ENCODE measurements at regions of chr19 and their contacts with region 1.

Region 1: DNA sequence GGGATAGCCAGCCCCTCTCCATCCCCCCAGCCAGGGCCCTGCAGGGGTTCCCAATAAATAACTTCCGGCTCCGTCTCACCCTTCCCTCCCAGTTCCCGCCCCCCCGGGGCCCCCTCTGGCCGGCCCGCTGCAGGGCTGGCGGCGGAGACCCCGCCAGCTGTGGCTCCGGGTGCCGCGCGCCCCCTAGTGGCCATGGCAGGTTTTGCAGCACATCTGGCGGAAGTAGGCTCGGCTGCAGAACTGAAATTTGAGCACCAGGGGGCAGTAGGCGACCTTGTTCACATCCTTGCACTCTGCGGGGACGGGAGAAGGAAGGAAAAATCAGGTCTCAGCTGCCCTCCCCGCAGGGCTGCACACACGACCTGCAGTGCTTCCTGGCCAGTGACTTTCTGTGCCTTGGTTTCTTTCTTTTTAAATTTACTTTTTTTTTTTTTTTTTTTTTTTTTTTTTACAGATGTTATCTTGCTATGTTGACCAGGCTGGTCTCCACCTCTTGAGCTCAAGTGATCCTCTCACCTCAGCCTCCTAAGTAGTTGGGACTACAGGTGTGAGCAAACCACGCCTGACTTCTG is 3.6 kb upstream of the MYO1F start:
- DNase-seq: peak; percentile 90
- H3K4me3 Mint-ChIP-seq: no peak overlapping the region
- H3K27ac Mint-ChIP-seq: no peak overlapping the region
- H3K4me1 Mint-ChIP-seq: peaks cover 29% of the 10 kb centered on the region
- H3K27me3 Mint-ChIP-seq: peaks cover 2% of the 10 kb centered on the region

Region 2: DNA sequence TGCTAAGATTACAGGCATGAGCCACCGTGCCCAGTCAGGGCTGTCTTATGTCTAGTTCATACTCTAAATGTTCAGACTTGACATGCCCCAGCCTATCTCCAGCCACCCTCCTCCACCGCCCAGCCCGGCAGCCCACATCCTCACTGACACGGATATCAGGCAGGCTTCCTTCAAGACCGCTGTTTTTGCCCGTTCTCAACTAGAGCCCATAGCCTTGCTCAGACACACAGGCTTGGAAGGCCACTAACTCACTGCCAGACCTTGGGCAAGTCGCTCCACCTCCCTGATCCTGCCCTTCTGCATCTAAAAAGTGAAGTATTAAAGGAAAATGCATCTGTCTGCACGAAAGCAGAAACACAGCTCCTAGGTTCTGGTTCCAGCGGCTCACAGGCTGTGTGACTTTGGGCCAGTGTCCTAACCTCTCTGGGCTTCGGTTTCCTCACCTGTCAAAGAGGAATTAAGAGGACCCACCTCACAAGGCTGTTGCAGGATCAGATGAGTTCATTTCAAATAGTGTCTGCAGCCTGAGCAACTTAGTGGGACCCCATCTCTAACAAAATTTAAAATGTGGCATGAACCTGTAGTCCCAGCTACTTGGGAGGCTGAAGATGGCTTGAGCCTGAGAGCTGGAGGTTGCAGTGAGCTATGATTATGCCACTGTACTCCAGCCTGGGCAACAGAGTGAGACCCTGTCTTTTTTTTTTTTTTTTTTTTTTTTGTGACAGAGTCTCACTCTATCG is 386.1 kb before region 1 on chr19:
- CTCF ChIA-PET with region 1: no interaction called
- POLR2A ChIA-PET with region 1: no interaction called
- intact Hi-C with region 1: no loop called
- DNase-seq: peak; percentile 73
- H3K4me3 Mint-ChIP-seq: peak overlapping the region; percentile 37
- H3K27ac Mint-ChIP-seq: peak overlapping the region; percentile 90
- H3K4me1 Mint-ChIP-seq: peaks cover 39% of the 10 kb centered on the region
- H3K27me3 Mint-ChIP-seq: no peaks in the 10 kb centered on the region

Region 3: GRCh38 chr19:8355631-8356402 is 225.0 kb before region 1 on chr19:
- CTCF ChIA-PET with region 1: interaction called, 52 read pairs
- POLR2A ChIA-PET with region 1: no interaction called
- intact Hi-C with region 1: loop called (anchors 5 kb)
- DNase-seq: peak; percentile 19
- H3K4me3 Mint-ChIP-seq: no peak overlapping the region
- H3K27ac Mint-ChIP-seq: no peak overlapping the region
- H3K4me1 Mint-ChIP-seq: peaks cover 8% of the 10 kb centered on the region
- H3K27me3 Mint-ChIP-seq: peaks cover 10% of the 10 kb centered on the region

Region 4: DNA sequence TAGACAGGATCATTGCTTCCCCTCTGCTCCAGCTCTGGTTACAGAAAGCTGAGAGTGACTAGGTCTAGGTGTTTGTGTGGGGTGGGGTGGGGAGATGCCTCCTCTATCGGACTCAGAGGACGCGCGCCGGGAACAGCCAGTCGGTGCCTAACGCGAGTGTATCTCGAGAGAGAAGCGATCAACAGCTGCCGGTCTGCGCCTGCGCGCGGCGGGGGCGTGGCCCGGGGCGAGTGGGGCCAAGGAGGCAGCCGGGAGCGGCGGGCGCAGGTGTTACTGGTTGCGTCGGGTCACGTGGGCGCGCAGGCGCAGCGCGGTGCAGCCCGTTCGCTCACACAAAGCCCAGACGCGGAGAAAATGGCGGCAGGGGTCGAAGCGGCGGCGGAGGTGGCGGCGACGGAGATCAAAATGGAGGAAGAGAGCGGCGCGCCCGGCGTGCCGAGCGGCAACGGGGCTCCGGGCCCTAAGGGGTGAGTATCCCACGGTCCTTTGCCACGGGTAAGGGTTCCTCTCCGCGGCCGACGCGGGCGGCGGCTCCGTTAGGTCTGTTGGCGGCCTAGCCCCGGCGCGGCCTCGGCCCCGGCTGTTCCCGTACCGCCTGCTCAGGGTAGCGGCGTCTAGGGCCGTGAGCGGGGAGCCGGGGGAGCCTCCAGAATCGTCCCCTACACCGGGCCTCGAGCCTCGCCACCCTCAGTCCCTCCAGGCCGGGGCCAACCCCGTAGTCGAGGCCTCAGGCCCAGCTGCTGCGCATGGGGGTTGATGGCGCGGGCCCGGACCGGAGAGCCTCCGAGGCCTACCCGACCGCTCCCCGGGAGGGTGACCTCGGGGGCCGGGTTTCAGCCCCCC is 135.9 kb before region 1 on chr19 and contains the start of gene HNRNPM:
- CTCF ChIA-PET with region 1: interaction called, 9 read pairs
- POLR2A ChIA-PET with region 1: interaction called, 4 read pairs
- intact Hi-C with region 1: loop called (anchors 5 kb)
- DNase-seq: peak; percentile 100
- H3K4me3 Mint-ChIP-seq: peak within 1 kb of the TSS; percentile 90
- H3K27ac Mint-ChIP-seq: peak within 1 kb of the TSS; percentile 98
- H3K4me1 Mint-ChIP-seq: peaks cover 36% of the 10 kb centered on the region
- H3K27me3 Mint-ChIP-seq: no peaks in the 10 kb centered on the region
- total RNA-seq, gene HNRNPM: 237 to 238 TPM

Region 5: GRCh38 chr19:8536282-8536681 is 44.5 kb before region 1 on chr19:
- CTCF ChIA-PET with region 1: interaction called, 11 read pairs
- POLR2A ChIA-PET with region 1: no interaction called
- intact Hi-C with region 1: no loop called
- DNase-seq: no peak
- H3K4me3 Mint-ChIP-seq: no peak overlapping the region
- H3K27ac Mint-ChIP-seq: no peak overlapping the region
- H3K4me1 Mint-ChIP-seq: no peaks in the 10 kb centered on the region
- H3K27me3 Mint-ChIP-seq: no peaks in the 10 kb centered on the region

Region 6: DNA sequence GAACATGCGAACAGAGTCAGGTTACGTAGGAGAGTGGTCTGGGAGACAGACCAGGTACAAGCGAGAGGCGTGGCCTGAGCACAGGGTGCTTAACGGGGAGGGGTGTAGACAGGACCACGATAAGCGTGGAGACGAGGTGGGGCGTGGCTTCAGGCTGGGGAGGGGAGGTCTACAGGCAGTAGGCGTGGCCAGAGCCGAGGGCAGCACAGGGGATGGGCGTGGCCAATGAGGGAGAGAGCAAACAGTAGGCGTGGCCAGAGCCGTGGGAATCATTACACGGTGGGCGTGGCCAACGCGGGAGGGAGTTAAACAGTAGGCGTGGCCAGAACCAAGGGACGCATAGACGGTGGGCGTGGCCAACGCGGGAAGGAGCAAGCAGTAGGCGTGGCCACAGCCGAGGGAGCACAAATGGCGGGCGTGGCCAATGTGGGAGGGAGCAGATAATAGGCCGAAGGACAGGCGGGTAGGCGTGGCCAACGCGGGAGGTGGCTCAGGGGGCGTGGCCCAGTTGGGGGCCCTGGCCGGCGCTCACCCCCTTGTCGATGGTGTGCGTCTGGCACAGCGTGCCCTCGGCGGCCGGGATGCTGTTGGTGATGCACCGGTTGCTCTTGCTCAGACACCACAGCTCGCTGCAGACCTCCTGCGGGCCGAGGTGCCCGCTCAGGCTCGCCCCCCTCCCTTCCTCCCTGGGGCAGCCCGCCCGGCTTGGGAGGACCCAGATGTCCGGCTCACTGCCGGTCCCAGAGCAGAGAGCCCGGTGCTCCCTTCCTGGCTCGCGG is 11.6 kb after region 1 on chr19:
- CTCF ChIA-PET with region 1: interaction called, 61 read pairs
- POLR2A ChIA-PET with region 1: interaction called, 4 read pairs
- intact Hi-C with region 1: loop called (anchors 1 kb)
- DNase-seq: peak; percentile 99
- H3K4me3 Mint-ChIP-seq: peak overlapping the region; percentile 70
- H3K27ac Mint-ChIP-seq: peak overlapping the region; percentile 59
- H3K4me1 Mint-ChIP-seq: peaks cover 7% of the 10 kb centered on the region
- H3K27me3 Mint-ChIP-seq: no peaks in the 10 kb centered on the region

Region 7: GRCh38 chr19:8626842-8627241 is 46.0 kb after region 1 on chr19:
- CTCF ChIA-PET with region 1: no interaction called
- POLR2A ChIA-PET with region 1: no interaction called
- intact Hi-C with region 1: no loop called
- DNase-seq: no peak
- H3K4me3 Mint-ChIP-seq: no peak overlapping the region
- H3K27ac Mint-ChIP-seq: no peak overlapping the region
- H3K4me1 Mint-ChIP-seq: no peaks in the 10 kb centered on the region
- H3K27me3 Mint-ChIP-seq: no peaks in the 10 kb centered on the region

Region 8: DNA sequence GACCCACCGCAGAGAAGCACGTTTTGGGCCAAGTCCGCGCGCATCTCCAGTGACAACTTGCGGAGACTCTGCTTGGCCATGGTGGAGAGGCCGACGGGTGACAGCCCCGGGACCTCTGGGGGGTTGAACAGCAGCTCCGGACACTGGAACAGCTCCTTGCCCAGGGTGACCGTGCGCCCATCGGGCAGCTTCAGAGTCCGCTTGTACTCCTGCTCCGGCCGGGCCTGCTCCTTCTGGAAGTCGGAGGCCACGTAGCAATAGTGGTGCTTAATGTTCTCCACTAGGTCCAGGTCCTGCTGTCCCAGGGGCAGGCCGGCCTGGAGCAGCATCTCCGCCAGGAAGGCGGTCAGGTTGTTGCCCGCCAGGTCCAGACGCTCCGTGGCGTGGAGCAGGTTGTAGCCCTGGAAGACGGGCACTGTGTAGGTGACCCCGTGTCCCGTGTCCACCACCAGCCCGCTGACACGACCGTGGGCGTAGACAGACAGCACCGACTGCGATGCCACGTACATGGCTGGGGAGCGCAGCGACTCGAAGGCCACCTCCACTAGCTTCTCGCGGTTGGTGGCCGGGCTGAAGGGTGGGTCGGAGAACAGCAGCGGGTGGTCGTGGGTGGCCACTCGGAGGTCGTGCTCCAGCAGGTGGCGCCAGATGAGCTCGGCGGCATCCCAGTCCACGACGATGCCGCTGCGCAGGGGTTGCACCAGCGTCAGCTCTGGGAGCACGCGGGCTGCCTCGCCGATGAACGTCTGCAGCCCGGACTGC is 117.1 kb after region 1 on chr19:
- CTCF ChIA-PET with region 1: interaction called, 12 read pairs
- POLR2A ChIA-PET with region 1: no interaction called
- intact Hi-C with region 1: loop called (anchors 1 kb)
- DNase-seq: peak; percentile 17
- H3K4me3 Mint-ChIP-seq: no peak overlapping the region
- H3K27ac Mint-ChIP-seq: no peak overlapping the region
- H3K4me1 Mint-ChIP-seq: peaks cover 33% of the 10 kb centered on the region
- H3K27me3 Mint-ChIP-seq: no peaks in the 10 kb centered on the region

Region 9: DNA sequence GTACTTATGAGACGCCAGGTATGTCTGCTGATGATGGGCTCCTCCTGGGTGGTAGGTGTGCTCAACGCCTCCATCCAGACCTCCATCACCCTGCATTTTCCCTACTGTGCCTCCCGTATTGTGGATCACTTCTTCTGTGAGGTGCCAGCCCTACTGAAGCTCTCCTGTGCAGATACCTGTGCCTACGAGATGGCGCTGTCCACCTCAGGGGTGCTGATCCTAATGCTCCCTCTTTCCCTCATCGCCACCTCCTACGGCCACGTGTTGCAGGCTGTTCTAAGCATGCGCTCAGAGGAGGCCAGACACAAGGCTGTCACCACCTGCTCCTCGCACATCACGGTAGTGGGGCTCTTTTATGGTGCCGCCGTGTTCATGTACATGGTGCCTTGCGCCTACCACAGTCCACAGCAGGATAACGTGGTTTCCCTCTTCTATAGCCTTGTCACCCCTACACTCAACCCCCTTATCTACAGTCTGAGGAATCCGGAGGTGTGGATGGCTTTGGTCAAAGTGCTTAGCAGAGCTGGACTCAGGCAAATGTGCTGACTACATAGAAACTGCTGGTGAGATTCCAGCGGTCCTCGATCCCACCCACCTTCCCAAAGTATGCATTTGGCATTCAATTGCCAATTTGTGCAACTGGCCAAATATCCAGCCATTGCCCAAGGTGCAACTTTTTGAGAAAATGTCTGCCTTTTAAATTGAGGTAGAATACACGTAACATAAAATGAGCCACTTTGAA is 150.8 kb after region 1 on chr19:
- CTCF ChIA-PET with region 1: no interaction called
- POLR2A ChIA-PET with region 1: no interaction called
- intact Hi-C with region 1: no loop called
- DNase-seq: peak; percentile 25
- H3K4me3 Mint-ChIP-seq: no peak overlapping the region
- H3K27ac Mint-ChIP-seq: no peak overlapping the region
- H3K4me1 Mint-ChIP-seq: no peaks in the 10 kb centered on the region
- H3K27me3 Mint-ChIP-seq: peaks cover 1% of the 10 kb centered on the region

Measured in activated CD4-positive, alpha-beta memory T cell treated with anti-CD3 and anti-CD28 coated beads for 36 hours (primary cell).